IMR-90 (cell line): ENCODE measurements at regions of chr2 and their contacts with region 1.

Region 1: DNA sequence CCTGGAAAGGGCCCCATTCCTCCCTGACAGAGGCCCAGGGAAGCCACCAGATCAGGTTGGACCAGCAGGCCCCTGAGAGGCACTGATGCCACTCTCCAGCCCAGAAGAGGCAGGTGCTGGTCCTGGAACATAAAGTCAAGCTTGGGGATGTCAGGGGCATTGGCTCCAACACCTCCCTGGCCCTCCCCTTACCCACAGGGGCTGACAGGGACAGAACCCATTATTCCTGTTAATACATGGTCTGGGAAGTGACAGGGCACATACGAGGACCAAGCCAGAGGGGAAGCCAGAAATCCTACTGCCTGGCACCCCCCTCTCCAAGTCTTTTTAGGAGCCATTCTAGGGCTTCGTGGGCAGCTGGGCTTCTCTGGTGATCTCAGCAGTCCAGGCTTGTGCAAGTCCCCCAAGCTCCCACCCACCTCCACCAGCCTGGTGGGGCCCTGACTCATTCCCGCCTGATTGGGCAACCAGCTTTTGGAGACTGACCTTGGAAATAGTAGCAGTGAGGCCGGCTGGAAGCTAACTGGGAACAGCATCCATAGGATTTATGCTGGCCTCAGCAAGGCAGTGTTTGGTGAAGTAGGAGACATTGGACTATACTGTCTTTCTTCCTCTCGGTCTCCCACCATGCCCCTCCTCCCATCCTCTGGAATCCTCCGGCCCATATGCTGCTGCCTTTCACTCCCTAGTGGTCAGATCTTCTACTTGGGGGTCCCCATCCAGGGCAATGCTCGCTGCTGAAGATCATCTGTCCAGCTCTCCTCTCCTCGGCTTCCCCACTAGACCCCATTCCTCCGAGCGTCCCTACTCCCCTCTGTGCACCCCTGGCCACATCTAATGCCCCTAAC is 86.4 kb upstream of the HK2 start:
- DNase-seq: peak; percentile 87
- ATAC-seq: peak; percentile 94
- H3K4me3 ChIP-seq: no peak overlapping the region
- H3K27ac ChIP-seq: peak overlapping the region; percentile 3; the same call in 1 of the 2 replicates
- H3K4me1 ChIP-seq: peaks cover 9% of the 10 kb centered on the region
- H3K27me3 ChIP-seq: no peaks in the 10 kb centered on the region
- CTCF ChIP-seq: no peak
- POLR2A ChIP-seq: no peak
- RAD21 ChIP-seq: no peak

Region 2: GRCh38 chr2:74764429-74765272 is 17.1 kb after region 1 on chr2:
- CTCF ChIA-PET with region 1: no interaction called
- POLR2A ChIA-PET with region 1: no interaction called
- dilution Hi-C with region 1: no loop called
- in situ Hi-C with region 1: no loop called
- intact Hi-C with region 1: loop called (anchors 2 kb)
- DNase-seq: peak; percentile 60
- ATAC-seq: peak; percentile 56
- H3K4me3 ChIP-seq: no peak overlapping the region
- H3K27ac ChIP-seq: peak overlapping the region; percentile 1; the same call in 1 of the 2 replicates
- H3K4me1 ChIP-seq: peaks cover 28% of the 10 kb centered on the region
- H3K27me3 ChIP-seq: no peaks in the 10 kb centered on the region
- CTCF ChIP-seq: no peak
- POLR2A ChIP-seq: no peak
- RAD21 ChIP-seq: no peak